ENCODE measurements at regions of chr17 and their contacts with region 1.

Region 1: GRCh38 chr17:37392024-37392590 is 14.5 kb downstream of the ACACA start:
- DNase-seq: no peak
- H3K4me3 ChIP-seq: no peak overlapping the region
- H3K27ac ChIP-seq: peak overlapping the region; percentile 5 to 10
- H3K4me1 ChIP-seq: peaks cover 0 to 7% of the 10 kb centered on the region in 2 donors
- H3K27me3 ChIP-seq: no peaks in the 10 kb centered on the region
- CTCF ChIP-seq: no peak

Region 2: DNA sequence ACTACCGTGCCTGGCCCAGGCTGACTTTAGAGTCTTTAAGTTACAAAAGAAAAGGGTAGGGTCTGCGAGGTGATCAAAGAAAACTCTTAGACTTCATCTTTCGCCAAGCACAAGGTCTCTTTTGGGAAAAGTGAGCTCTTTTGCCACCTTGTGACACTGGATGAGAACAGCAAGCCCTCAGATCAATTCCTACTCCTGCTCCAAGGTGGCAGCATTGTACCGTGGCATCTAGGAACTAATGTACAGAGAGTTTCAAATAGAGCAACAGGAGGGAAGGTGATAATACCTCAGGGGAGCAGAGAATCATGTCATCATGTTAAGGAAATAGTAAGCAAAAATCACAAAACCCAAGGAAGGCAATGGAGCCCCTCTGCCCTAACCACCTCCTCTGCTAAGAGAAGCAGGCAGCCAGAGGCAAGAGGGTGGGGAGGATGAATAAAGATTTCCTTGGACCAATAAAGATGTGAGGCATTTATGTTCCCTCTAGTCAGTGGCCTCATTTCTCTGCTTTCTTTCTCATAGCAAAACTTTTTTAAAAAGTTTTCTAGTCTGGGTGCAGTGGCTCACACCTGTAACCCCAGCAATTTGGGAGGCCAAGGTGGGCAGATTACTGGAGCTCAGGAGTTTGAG is 18.5 kb before region 1 on chr17:
- intact Hi-C with region 1: loop called (anchors 2 kb)
- DNase-seq: peak; percentile 19 to 70
- H3K4me3 ChIP-seq: no peak overlapping the region
- H3K27ac ChIP-seq: no peak overlapping the region
- H3K4me1 ChIP-seq: no peaks in the 10 kb centered on the region
- H3K27me3 ChIP-seq: no peaks in the 10 kb centered on the region
- CTCF ChIP-seq: peak; percentile 79 to 94 (median 88)

Region 3: GRCh38 chr17:37406635-37407461 is 14.7 kb after region 1 on chr17 and contains the starts of genes ACACA and TADA2A:
- intact Hi-C with region 1: no loop called
- DNase-seq: peak; percentile 22 to 88
- H3K4me3 ChIP-seq: peak within 1 kb of the TSS; percentile 72 to 95
- H3K27ac ChIP-seq: peak within 1 kb of the TSS; percentile 90 to 94
- H3K4me1 ChIP-seq: peaks cover 0 to 16% of the 10 kb centered on the region in 2 donors
- H3K27me3 ChIP-seq: no peaks in the 10 kb centered on the region
- CTCF ChIP-seq: peak in 1 of 3 experiments; percentile 22
- total RNA-seq, gene ACACA: 69.0 TPM
- total RNA-seq, gene TADA2A: 7.7 TPM

Measured in ascending aorta (tissue), 2 donors.